Cardiac septum (tissue), 1 donor: ENCODE measurements at regions of chr16 and their contacts with region 1.

Region 1: DNA sequence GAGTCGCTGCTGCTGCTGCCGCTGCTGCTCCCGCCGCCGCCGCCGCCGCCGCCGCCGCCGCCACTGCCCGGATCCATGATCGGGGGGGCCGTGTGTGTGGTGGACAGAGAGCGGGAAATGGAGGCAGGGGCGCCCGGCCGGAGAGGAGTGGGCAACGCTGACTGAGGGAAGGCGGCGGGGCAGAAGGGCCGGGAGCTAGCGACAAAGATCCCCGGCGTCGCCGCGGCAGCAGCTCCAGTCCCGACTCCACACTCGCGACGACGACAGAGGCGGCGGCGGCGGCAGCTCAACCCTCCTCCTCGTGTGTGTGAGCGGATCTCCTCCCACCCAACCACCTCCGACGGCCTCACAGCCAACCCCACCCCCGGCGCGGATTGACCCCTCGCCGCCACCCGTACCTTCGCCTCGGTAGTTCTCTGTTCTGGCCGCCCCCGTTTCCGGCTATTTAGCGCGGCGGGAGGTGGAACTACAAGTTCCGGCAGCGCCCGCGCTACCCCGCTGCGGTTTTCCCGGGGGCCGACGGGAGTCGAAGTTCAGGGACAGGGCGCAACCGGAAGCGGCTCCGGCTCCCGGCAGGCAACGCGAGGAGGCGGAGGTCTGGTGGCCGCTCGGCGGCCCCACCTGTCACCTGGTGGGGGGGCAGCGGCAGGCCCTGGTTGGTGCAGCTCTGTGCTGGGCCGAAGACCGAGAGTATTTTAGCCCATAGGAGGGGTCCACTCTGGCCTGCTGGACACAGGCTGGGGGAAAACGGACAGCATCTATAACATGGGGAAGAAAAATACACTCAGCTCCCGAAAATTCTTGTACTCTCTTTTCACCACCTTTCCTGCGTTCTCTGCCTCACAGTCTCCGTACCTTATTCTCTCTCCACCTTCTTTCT is at the start of gene GSPT1:
- DNase-seq: peak; percentile 99
- total RNA-seq, gene GSPT1: 86.6 TPM

Region 2: GRCh38 chr16:11851294-11852091 is 64.4 kb before region 1 on chr16 and contains the start of gene RSL1D1:
- intact Hi-C with region 1: loop called (anchors 1 kb)
- DNase-seq: peak; percentile 97
- total RNA-seq, gene RSL1D1: 77.9 TPM

Region 3: GRCh38 chr16:11977376-11978041 is 61.6 kb after region 1 on chr16:
- intact Hi-C with region 1: loop called (anchors 2 kb)
- DNase-seq: no peak

Region 4: GRCh38 chr16:12010388-12011251 is 94.7 kb after region 1 on chr16:
- intact Hi-C with region 1: no loop called
- DNase-seq: no peak

Region 5: DNA sequence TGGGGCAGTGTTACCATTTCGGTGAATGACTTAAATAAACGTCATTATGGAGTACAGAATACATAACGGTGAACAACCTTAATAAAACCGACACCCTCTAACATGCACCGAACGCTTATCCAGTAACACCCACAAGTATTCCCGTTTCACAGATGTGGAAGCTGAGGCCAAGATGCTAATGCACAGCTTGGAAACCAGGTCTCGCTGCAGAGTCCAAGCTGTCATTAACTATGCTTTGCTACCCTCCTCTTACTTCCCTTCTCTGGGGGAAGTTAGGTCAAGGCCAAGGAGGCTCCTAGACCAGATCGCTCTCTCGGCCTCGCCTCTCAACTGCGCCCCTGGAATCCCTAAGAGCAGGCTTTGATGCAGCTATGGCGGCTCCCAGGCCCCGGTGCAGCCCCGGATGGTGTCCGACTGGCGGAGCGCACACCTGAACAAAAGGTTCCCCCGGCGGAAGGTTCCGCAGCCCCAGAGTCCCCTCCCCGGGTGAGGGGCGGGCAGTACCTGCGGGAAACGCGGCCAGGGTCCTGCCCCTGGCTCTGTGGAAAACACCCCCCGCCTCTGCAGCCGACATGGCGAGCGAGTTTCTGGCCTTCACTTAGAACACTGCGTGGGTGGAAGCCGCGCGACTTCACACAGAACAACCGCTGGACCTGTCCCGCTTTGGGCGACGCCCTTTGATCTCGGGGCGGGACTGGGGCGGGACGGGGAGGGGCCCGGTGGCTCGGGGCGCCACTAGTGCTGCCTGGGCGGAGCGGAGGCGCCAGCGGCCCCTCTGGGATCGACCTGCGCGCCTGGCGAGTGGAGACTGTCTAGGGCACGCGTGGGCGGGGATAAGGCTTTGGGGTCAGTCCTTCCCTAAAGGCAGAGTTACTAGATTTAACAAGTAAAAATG is 887.6 kb after region 1 on chr16 and contains the start of gene CPPED1:
- intact Hi-C with region 1: loop called (anchors 10 kb)
- DNase-seq: peak; percentile 97
- total RNA-seq, gene CPPED1: 13.3 TPM